ENCODE measurements at regions of chr6 and their contacts with region 1.

Region 1: GRCh38 chr6:72622094-72622940 is 453 bp downstream of the KCNQ5 start:
- DNase-seq: peak; percentile 54
- H3K4me3 Mint-ChIP-seq: peak overlapping the region; percentile 95
- H3K27ac Mint-ChIP-seq: peak overlapping the region; percentile 96
- H3K4me1 Mint-ChIP-seq: peaks cover 70% of the 10 kb centered on the region
- H3K27me3 Mint-ChIP-seq: no peaks in the 10 kb centered on the region

Region 2: GRCh38 chr6:72649032-72649984 is 27.0 kb after region 1 on chr6:
- intact Hi-C with region 1: loop called (anchors 1 kb)
- DNase-seq: no peak
- H3K4me3 Mint-ChIP-seq: no peak overlapping the region
- H3K27ac Mint-ChIP-seq: peak overlapping the region; percentile 35
- H3K4me1 Mint-ChIP-seq: peaks cover 41% of the 10 kb centered on the region
- H3K27me3 Mint-ChIP-seq: no peaks in the 10 kb centered on the region

Region 3: DNA sequence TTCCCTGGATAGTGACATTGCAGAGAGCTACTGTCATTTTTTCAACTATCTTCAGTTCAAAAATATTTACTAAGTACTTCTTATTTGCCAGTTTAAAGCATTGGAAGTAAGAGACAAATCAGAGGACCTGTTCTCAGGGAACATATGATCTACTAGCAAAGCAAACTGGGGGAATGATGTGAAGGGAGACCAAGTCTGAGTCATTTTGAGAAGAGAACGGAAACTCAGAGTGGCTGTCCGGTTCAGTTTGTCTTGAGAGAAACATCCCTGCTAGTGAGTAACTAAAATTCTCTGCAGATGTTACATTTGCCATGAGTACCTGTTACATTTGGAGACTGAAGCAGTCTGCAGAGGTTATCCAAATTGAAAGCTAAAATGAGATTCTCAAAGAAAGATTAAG is 117.8 kb after region 1 on chr6:
- intact Hi-C with region 1: loop called (anchors 2 kb)
- DNase-seq: no peak
- H3K4me3 Mint-ChIP-seq: no peak overlapping the region
- H3K27ac Mint-ChIP-seq: peak overlapping the region; percentile 47
- H3K4me1 Mint-ChIP-seq: peaks cover 37% of the 10 kb centered on the region
- H3K27me3 Mint-ChIP-seq: no peaks in the 10 kb centered on the region

Region 4: DNA sequence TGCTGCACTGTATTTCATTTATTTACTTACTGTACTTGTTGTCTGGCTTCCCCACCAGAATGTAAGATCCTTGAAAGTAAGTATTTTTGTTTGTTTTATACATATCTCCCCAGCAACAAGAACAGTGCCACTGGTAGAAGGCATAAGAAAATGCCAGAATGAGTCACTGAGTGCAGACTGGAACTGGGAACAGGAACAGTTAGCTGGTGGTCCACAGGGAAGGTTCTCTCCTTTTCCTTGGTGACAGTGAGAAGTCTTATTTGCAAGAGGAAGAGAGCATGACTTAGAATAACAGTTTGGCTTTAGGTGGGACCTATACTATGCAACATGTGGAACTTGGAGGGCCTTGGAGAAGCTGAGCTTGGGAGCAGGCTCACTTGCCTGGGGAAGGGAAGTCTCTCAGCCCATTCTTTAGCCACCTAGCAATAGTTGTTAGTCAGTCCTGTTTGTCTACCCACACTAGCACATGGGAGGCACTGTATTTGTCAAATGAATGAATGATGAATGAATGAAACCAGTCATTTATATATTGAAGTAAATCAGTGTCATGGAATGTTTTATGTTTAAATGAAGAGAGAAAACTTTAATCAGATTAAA is 203.1 kb after region 1 on chr6:
- intact Hi-C with region 1: loop called (anchors 1 kb)
- DNase-seq: no peak
- H3K4me3 Mint-ChIP-seq: peak overlapping the region; percentile 37
- H3K27ac Mint-ChIP-seq: peak overlapping the region; percentile 84
- H3K4me1 Mint-ChIP-seq: peaks cover 33% of the 10 kb centered on the region
- H3K27me3 Mint-ChIP-seq: no peaks in the 10 kb centered on the region

Region 5: GRCh38 chr6:73032586-73032985 is 410.3 kb after region 1 on chr6:
- intact Hi-C with region 1: loop called (anchors 1 kb)
- DNase-seq: no peak
- H3K4me3 Mint-ChIP-seq: no peak overlapping the region
- H3K27ac Mint-ChIP-seq: no peak overlapping the region
- H3K4me1 Mint-ChIP-seq: peaks cover 33% of the 10 kb centered on the region
- H3K27me3 Mint-ChIP-seq: no peaks in the 10 kb centered on the region

Region 6: DNA sequence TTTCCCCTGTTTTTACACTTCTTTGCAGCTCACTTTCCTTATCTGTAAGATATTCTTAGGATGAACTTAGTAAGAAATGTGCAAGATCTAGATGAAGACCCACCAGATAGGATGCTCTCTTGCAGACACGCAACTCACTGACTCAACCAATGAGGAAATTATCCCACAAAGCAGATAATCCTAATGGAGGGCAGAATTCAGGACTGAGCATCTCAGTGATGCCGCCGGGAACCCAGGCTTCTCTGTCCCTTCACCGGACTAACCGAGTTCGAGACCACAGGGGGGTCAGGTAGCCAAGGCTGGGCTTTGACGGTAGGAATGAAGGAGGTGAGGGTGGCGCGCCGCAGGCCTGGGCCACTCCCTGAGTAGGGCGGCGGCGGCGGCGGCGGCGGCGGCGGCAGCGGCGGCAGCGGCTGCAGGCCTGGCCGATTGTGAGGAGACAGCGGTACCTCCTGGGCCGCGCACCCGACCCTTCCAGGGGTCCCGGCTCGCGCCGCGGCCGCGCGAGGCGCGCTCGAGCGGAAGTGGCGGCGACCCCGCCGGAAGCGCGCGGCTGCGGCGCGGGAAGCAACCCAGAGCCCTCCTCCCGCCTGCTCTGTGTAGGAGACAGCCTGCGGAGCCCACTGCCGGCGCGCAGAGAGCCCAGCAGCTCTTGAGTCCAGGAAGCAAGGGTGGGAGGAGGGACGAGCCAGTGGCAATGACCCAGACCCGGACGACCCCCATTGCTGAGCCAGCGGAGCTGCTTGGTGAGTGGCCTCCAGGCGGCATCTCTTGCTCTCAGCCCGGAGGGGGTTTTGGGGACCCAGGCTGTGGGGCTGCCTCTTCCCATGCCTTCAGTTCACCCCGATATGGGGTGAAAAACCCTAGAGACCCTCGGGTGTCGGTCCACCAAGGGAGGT is 640.6 kb after region 1 on chr6 and contains the start of gene KHDC1:
- intact Hi-C with region 1: loop called (anchors 5 kb)
- DNase-seq: peak; percentile 58
- H3K4me3 Mint-ChIP-seq: peak within 1 kb of the TSS; percentile 88
- H3K27ac Mint-ChIP-seq: peak within 1 kb of the TSS; percentile 68
- H3K4me1 Mint-ChIP-seq: peaks cover 30% of the 10 kb centered on the region
- H3K27me3 Mint-ChIP-seq: no peaks in the 10 kb centered on the region
- total RNA-seq, gene KHDC1: 6.7 and 7.1 TPM in 2 replicates

Region 7: GRCh38 chr6:73451223-73452107 is 829.1 kb after region 1 on chr6:
- intact Hi-C with region 1: loop called (anchors 10 kb)
- DNase-seq: peak; percentile 37
- H3K4me3 Mint-ChIP-seq: peak overlapping the region; percentile 87
- H3K27ac Mint-ChIP-seq: peak overlapping the region; percentile 82
- H3K4me1 Mint-ChIP-seq: peaks cover 25% of the 10 kb centered on the region
- H3K27me3 Mint-ChIP-seq: no peaks in the 10 kb centered on the region

Measured in activated T-helper 2 cell treated with anti-CD3 and anti-CD28 coated beads, Interferon-gamma antibody, Interleukin-2, Interleukin-4, amounts not matched to agents 10 μg/mL and 5 μg/mL and 100 μg/mL, durations not matched to agents 14 hours and 24 hours and 36 hours (primary cell).